Sciatic nerve (tissue), 2 donors: ENCODE measurements at regions of chrX and their contacts with region 1.

Region 1: GRCh38 chrX:18390941-18391538 is 34.4 kb upstream of the CDKL5 start:
- DNase-seq: peak; percentile 88
- ATAC-seq: no peak

Region 2: DNA sequence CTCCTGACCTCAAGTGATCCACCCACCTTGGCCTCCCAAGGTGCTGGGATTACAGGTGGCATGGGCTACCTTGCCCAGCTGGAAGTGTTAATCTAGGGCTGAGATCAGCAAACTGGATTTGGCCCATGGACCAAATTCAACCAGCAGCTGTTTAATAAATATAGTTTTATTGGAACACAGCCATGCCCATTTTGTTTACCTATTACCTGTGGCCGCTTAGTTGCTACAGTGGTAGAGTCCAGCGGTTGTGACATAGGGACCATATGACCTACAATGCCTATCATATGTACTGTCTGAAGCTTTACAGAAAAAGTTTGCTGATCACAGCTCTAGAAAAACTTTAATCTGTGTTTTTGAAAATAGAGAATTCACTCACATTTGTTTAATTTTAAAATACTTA is 935.5 kb after region 1 on chrX:
- intact Hi-C with region 1: loop called (anchors 10 kb)
- DNase-seq: no peak
- ATAC-seq: no peak